ENCODE measurements at regions of chr2 and their contacts with region 1.

Region 1: GRCh38 chr2:12141618-12142258 is 395.3 kb downstream of the LPIN1 start:
- DNase-seq: no peak
- ATAC-seq: no peak
- H3K4me3 ChIP-seq: no peak overlapping the region
- H3K4me3 Mint-ChIP-seq: no peak overlapping the region
- H3K27ac ChIP-seq: no peak overlapping the region
- H3K27ac Mint-ChIP-seq: no peak overlapping the region
- H3K4me1 ChIP-seq: peaks cover 3% of the 10 kb centered on the region
- H3K4me1 Mint-ChIP-seq: peaks cover 19% of the 10 kb centered on the region
- H3K27me3 ChIP-seq: no peaks in the 10 kb centered on the region
- H3K27me3 Mint-ChIP-seq: no peaks in the 10 kb centered on the region
- CTCF ChIP-seq: no peak

Region 2: GRCh38 chr2:12017499-12018157 is 124.1 kb before region 1 on chr2:
- CTCF ChIA-PET with region 1: no interaction called
- POLR2A ChIA-PET with region 1: no interaction called
- intact Hi-C with region 1: no loop called
- DNase-seq: no peak
- ATAC-seq: no peak
- H3K4me3 ChIP-seq: no peak overlapping the region
- H3K4me3 Mint-ChIP-seq: no peak overlapping the region
- H3K27ac ChIP-seq: no peak overlapping the region
- H3K27ac Mint-ChIP-seq: no peak overlapping the region
- H3K4me1 ChIP-seq: no peaks in the 10 kb centered on the region
- H3K4me1 Mint-ChIP-seq: peaks cover 14% of the 10 kb centered on the region
- H3K27me3 ChIP-seq: peaks cover 0 to 5% of the 10 kb centered on the region in 2 experiments
- H3K27me3 Mint-ChIP-seq: no peaks in the 10 kb centered on the region
- CTCF ChIP-seq: no peak

Region 3: DNA sequence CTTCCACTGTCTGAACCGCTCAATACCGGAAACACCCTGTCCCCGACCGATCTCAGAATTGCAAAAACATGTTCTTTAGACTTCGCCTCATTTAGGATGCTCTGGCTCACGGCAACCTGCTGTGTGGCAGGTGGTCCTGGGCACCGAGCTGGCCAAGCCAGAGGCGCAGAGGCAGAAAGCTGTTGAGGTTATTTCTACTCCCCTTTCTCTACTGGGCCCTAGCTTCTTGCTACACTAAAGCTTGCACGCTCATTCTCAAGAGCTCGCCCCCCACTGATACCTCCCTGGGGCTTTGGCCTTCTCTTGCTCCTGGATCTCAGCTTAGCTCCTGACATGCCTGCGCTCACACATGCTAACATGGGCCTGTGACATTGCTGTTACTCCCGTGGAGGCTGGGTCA is 22.1 kb after region 1 on chr2:
- CTCF ChIA-PET with region 1: no interaction called
- POLR2A ChIA-PET with region 1: no interaction called
- intact Hi-C with region 1: loop called in 1 of 2 experiments (anchors 1 kb)
- DNase-seq: no peak
- ATAC-seq: no peak
- H3K4me3 ChIP-seq: no peak overlapping the region
- H3K4me3 Mint-ChIP-seq: no peak overlapping the region
- H3K27ac ChIP-seq: no peak overlapping the region
- H3K27ac Mint-ChIP-seq: no peak overlapping the region
- H3K4me1 ChIP-seq: peaks cover 4% of the 10 kb centered on the region
- H3K4me1 Mint-ChIP-seq: peaks cover 30% of the 10 kb centered on the region
- H3K27me3 ChIP-seq: no peaks in the 10 kb centered on the region
- H3K27me3 Mint-ChIP-seq: no peaks in the 10 kb centered on the region
- CTCF ChIP-seq: no peak

Region 4: GRCh38 chr2:12320991-12321641 is 179.4 kb after region 1 on chr2:
- CTCF ChIA-PET with region 1: no interaction called
- POLR2A ChIA-PET with region 1: no interaction called
- intact Hi-C with region 1: no loop called
- DNase-seq: no peak
- ATAC-seq: no peak
- H3K4me3 ChIP-seq: no peak overlapping the region
- H3K4me3 Mint-ChIP-seq: no peak overlapping the region
- H3K27ac ChIP-seq: no peak overlapping the region
- H3K27ac Mint-ChIP-seq: no peak overlapping the region
- H3K4me1 ChIP-seq: no peaks in the 10 kb centered on the region
- H3K4me1 Mint-ChIP-seq: no peaks in the 10 kb centered on the region
- H3K27me3 ChIP-seq: no peaks in the 10 kb centered on the region
- H3K27me3 Mint-ChIP-seq: no peaks in the 10 kb centered on the region
- CTCF ChIP-seq: no peak

Measured in CD4-positive, alpha-beta T cell (primary cell).